CD4-positive, alpha-beta memory T cell (primary cell): ENCODE measurements at regions of chr15 and their contacts with region 1.

Region 1: DNA sequence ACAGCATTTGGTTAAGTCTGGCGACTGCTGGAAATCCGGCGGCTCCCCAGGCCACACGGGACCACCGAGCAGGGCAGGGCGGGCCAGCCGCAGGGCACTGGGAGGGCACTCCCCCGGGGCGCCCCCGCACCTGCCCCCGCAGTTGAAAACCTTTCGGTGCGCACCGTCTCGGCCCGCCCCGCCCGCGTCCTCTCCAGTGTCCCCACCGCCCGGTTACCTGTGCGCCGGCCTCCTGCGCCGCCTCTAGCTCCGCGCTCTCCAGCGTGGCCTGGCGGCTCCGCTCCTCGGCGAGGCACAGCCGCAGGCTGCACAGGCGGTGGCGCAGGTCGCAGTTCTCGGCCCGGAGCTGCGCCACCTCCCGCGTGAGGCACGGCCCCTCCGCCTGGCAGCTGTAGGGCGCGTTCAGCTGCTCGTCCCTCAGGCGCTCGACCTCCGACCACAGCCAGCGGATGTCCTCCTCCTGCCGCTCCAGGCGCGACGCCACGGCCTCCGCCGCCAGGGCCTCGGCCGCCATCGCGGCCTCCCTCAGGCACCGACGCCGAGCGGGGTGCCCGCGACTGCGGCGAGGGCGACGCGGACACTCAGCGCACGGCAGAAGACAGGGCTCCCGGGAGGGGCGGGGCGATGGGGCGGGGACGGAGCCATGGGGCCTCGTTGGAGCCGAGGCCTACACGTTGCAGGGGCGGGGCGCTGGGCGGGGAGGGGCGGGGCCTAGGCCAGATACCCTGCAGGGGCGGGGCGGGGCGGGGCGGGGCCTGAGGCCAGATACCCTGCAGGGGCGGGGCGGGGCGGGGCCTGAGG is at the start of gene TARS3:
- DNase-seq: peak; percentile 90 to 97 (median 90)
- H3K4me3 ChIP-seq: peak within 1 kb of the TSS; percentile 45 to 76
- H3K4me3 Mint-ChIP-seq: peak within 1 kb of the TSS; percentile 83 to 97 (median 92)
- H3K27ac ChIP-seq: peak within 1 kb of the TSS; percentile 75
- H3K27ac Mint-ChIP-seq: peak within 1 kb of the TSS; percentile 87 to 95 (median 91)
- H3K4me1 ChIP-seq: peaks cover 22% of the 10 kb centered on the region
- H3K4me1 Mint-ChIP-seq: peaks cover 17 to 43% (median 30%) of the 10 kb centered on the region in 4 donors
- H3K27me3 ChIP-seq: no peaks in the 10 kb centered on the region
- H3K27me3 Mint-ChIP-seq: no peaks in the 10 kb centered on the region
- total RNA-seq, gene TARS3: 35.8 to 39.8 TPM

Region 2: GRCh38 chr15:101528108-101528916 is 195.8 kb before region 1 on chr15:
- CTCF ChIA-PET with region 1: no interaction called
- POLR2A ChIA-PET with region 1: no interaction called
- intact Hi-C with region 1: no loop called
- DNase-seq: no peak
- H3K4me3 ChIP-seq: no peak overlapping the region
- H3K4me3 Mint-ChIP-seq: no peak overlapping the region
- H3K27ac ChIP-seq: no peak overlapping the region
- H3K27ac Mint-ChIP-seq: peak overlapping the region in 1 of 7 donors; percentile 0
- H3K4me1 ChIP-seq: no peaks in the 10 kb centered on the region
- H3K4me1 Mint-ChIP-seq: no peaks in the 10 kb centered on the region
- H3K27me3 ChIP-seq: no peaks in the 10 kb centered on the region
- H3K27me3 Mint-ChIP-seq: peaks cover 1 to 7% of the 10 kb centered on the region in 2 donors

Region 3: DNA sequence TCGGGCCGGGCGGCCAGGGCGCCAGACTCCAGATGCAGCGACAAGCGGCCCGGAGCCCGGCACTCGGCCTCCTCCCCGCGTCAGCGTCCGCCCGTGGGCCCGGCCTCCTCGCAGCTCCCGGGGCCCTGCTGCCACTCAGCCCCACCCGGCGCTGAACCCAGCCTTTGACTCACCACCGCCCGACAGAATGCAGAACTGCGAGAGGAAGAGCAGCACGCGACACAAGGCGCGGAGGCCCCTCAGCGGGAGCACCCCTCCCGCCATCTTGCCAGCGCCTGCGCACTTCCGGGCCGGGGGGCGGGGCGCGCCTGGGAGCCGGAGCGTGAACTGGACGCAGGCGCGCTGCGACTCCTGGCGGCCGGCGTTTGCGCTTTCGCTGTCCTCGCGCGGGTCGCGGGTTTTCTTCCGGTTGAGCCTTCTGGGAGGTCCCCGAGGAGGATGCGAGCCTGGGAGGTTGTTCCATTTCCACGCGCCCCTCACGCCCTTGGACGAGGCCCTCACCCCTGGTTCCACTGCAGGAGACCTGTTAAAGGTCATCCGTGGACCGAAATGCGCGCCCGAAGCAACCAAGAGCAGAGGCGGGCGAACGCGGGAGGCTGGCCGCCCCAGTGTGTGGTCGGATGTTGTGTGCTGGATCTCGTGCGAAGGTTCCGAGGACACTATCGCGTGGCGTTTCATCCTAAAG is 71.8 kb before region 1 on chr15 and contains the start of gene TM2D3:
- CTCF ChIA-PET with region 1: interaction called, 3 read pairs
- POLR2A ChIA-PET with region 1: interaction called, 19 read pairs
- intact Hi-C with region 1: loop called (anchors 1 kb)
- DNase-seq: peak; percentile 94 to 97 (median 96)
- H3K4me3 ChIP-seq: peak within 1 kb of the TSS; percentile 62 to 96
- H3K4me3 Mint-ChIP-seq: peak within 1 kb of the TSS; percentile 92 to 95 (median 95)
- H3K27ac ChIP-seq: peak within 1 kb of the TSS; percentile 97
- H3K27ac Mint-ChIP-seq: peak within 1 kb of the TSS; percentile 95 to 98 (median 97)
- H3K4me1 ChIP-seq: peaks cover 33% of the 10 kb centered on the region
- H3K4me1 Mint-ChIP-seq: peaks cover 19 to 53% (median 29%) of the 10 kb centered on the region in 4 donors
- H3K27me3 ChIP-seq: no peaks in the 10 kb centered on the region
- H3K27me3 Mint-ChIP-seq: no peaks in the 10 kb centered on the region
- total RNA-seq, gene TM2D3: 86.3 to 92.9 TPM